PC-3 (cell line): ENCODE measurements at regions of chr2 and their contacts with region 1.

Region 1: DNA sequence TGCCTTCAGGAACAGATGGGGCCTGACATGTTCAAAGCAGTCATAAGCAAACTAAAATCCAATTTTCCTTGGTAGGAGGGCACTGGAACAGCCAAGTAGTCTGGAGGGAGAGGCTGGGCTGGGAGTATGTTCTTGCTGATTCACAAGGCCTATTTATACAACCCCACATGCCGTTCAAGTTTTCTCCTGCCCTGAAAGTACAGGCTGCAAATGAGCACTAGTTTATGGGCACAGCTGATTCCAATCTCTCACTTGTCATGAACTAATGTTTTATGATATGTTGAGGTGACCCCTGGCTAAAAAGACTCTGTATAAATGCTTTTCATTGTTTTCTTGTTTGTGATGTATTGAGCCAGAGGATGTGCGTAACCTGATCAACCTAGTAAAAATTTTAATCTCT is 183.4 kb upstream of the SRD5A2 start:
- DNase-seq: peak; percentile 53
- ATAC-seq: peak; percentile 82
- H3K4me3 ChIP-seq: no peak overlapping the region
- H3K27ac ChIP-seq: peak overlapping the region; percentile 24
- H3K4me1 ChIP-seq: peaks cover 7% of the 10 kb centered on the region
- H3K27me3 ChIP-seq: no peaks in the 10 kb centered on the region
- CTCF ChIP-seq: no peak

Region 2: DNA sequence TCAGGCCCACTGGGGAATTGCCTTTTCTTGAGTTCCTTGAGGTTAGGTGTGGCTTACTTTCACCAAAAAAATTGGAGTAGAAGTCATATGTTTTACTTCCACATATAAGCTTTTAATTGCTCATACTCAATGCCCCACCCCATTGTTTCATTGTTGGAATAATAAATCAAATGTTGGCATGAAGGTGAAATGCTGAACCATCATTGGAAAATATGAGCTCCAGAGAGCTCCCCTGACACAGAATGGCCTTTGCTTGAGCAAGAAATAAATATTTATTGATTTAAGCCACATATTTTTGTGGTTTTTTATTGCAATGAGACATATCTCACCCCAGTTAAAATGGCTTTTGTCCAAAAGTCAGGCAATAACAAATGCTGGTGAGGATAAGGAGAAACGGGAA is 16.1 kb before region 1 on chr2:
- CTCF ChIA-PET with region 1: no interaction called
- POLR2A ChIA-PET with region 1: no interaction called
- intact Hi-C with region 1: loop called (anchors 1 kb)
- DNase-seq: peak; percentile 79
- ATAC-seq: peak; percentile 53
- H3K4me3 ChIP-seq: no peak overlapping the region
- H3K27ac ChIP-seq: 0 out of 2 replicates have a peak overlapping the region, but pooled peaks have one; percentile 29
- H3K4me1 ChIP-seq: peaks cover 8% of the 10 kb centered on the region
- H3K27me3 ChIP-seq: no peaks in the 10 kb centered on the region
- CTCF ChIP-seq: no peak

Region 3: GRCh38 chr2:31812051-31812798 is 48.1 kb after region 1 on chr2:
- CTCF ChIA-PET with region 1: no interaction called
- POLR2A ChIA-PET with region 1: no interaction called
- intact Hi-C with region 1: no loop called
- DNase-seq: peak; percentile 13
- ATAC-seq: no peak; the same call in 1 of the 2 replicates
- H3K4me3 ChIP-seq: no peak overlapping the region
- H3K27ac ChIP-seq: no peak overlapping the region
- H3K4me1 ChIP-seq: no peaks in the 10 kb centered on the region
- H3K27me3 ChIP-seq: peaks cover 5% of the 10 kb centered on the region; the same call in 1 of the 2 replicates
- CTCF ChIP-seq: no peak